ENCODE measurements at regions of chr6 and their contacts with region 1.

Region 1: GRCh38 chr6:129621247-129621646 is 88.7 kb downstream of the ARHGAP18 start:
- DNase-seq: no peak
- ATAC-seq: peak; percentile 71
- H3K4me3 Mint-ChIP-seq: no peak overlapping the region
- H3K27ac Mint-ChIP-seq: no peak overlapping the region
- H3K4me1 Mint-ChIP-seq: no peaks in the 10 kb centered on the region
- H3K27me3 Mint-ChIP-seq: no peaks in the 10 kb centered on the region
- CTCF ChIP-seq: no peak

Region 2: GRCh38 chr6:129641344-129641743 is 20.1 kb after region 1 on chr6:
- CTCF ChIA-PET with region 1: no interaction called
- POLR2A ChIA-PET with region 1: no interaction called
- intact Hi-C with region 1: loop called (anchors 2 kb)
- DNase-seq: no peak
- ATAC-seq: no peak
- H3K4me3 Mint-ChIP-seq: no peak overlapping the region
- H3K27ac Mint-ChIP-seq: no peak overlapping the region
- H3K4me1 Mint-ChIP-seq: no peaks in the 10 kb centered on the region
- H3K27me3 Mint-ChIP-seq: no peaks in the 10 kb centered on the region
- CTCF ChIP-seq: no peak

Region 3: GRCh38 chr6:129709769-129710449 is 88.7 kb after region 1 on chr6 and contains the start of gene ARHGAP18:
- CTCF ChIA-PET with region 1: no interaction called
- POLR2A ChIA-PET with region 1: no interaction called
- intact Hi-C with region 1: loop called (anchors 5 kb)
- DNase-seq: peak; percentile 70
- ATAC-seq: peak; percentile 97
- H3K4me3 Mint-ChIP-seq: peak within 1 kb of the TSS; percentile 98
- H3K27ac Mint-ChIP-seq: peak within 1 kb of the TSS; percentile 93
- H3K4me1 Mint-ChIP-seq: peaks cover 47% of the 10 kb centered on the region
- H3K27me3 Mint-ChIP-seq: no peaks in the 10 kb centered on the region
- CTCF ChIP-seq: no peak
- total RNA-seq, gene ARHGAP18: 7.9 and 9.0 TPM in 2 replicates

Measured in activated B cell treated with CpG ODN at 0.5 μM for 24 hours (primary cell).